Endothelial cell of umbilical vein (primary cell): ENCODE measurements at regions of chr15 and their contacts with region 1.

Region 1: GRCh38 chr15:95259513-95259912 is 1028.2 kb downstream of the MCTP2 start:
- DNase-seq: peak; percentile 92
- H3K4me3 ChIP-seq: no peak overlapping the region
- H3K27ac ChIP-seq: peak overlapping the region; percentile 89
- H3K4me1 ChIP-seq: peaks cover 46% of the 10 kb centered on the region
- H3K27me3 ChIP-seq: no peaks in the 10 kb centered on the region
- CTCF ChIP-seq: peak; percentile 71
- POLR2A ChIP-seq: no peak

Region 2: GRCh38 chr15:94412979-94413746 is 846.4 kb before region 1 on chr15:
- CTCF ChIA-PET with region 1: no interaction called
- POLR2A ChIA-PET with region 1: no interaction called
- dilution Hi-C with region 1: no loop called
- intact Hi-C with region 1: loop called (anchors 10 kb)
- DNase-seq: peak; percentile 47
- H3K4me3 ChIP-seq: no peak overlapping the region
- H3K27ac ChIP-seq: no peak overlapping the region
- H3K4me1 ChIP-seq: no peaks in the 10 kb centered on the region
- H3K27me3 ChIP-seq: no peaks in the 10 kb centered on the region
- CTCF ChIP-seq: peak in 1 of 2 donors; percentile 20
- POLR2A ChIP-seq: no peak

Region 3: GRCh38 chr15:95247099-95247984 is 12.2 kb before region 1 on chr15:
- CTCF ChIA-PET with region 1: interaction called, 10 read pairs
- POLR2A ChIA-PET with region 1: no interaction called
- dilution Hi-C with region 1: no loop called
- intact Hi-C with region 1: no loop called
- DNase-seq: peak; percentile 91
- H3K4me3 ChIP-seq: no peak overlapping the region
- H3K27ac ChIP-seq: peak overlapping the region; percentile 53
- H3K4me1 ChIP-seq: peaks cover 15% of the 10 kb centered on the region
- H3K27me3 ChIP-seq: no peaks in the 10 kb centered on the region
- CTCF ChIP-seq: no peak
- POLR2A ChIP-seq: peak; percentile 16

Region 4: DNA sequence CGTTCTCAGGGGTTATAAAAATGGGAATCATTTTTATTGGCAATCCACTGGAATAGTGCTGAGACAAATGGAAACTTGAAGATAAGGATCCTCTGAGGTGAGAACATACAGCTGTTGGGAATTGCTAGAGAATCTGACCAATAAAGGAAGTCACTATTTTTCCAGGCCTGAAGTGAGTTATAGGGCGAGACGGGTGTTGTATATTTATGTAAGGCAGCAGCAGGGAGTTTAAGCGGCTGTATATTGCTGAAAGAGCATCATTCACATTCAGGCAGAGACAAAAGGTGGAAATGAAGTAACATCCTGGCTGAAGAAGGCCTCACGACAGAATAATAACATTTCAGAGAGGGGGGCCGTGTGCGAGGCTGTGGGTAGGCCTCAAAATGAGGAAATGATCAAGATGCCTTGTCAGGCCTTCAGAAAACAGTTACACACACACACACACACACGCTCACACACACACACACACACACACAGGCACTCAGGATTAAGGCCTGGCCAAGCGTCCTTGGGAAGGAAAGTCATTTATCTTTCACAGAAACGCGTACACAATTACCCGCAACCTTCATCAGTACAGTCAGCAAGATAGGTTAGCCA is 106.1 kb after region 1 on chr15:
- CTCF ChIA-PET with region 1: interaction called, 3 read pairs
- POLR2A ChIA-PET with region 1: no interaction called
- dilution Hi-C with region 1: no loop called
- intact Hi-C with region 1: loop called (anchors 1 kb)
- DNase-seq: peak; percentile 100
- H3K4me3 ChIP-seq: no peak overlapping the region
- H3K27ac ChIP-seq: peak overlapping the region; percentile 98
- H3K4me1 ChIP-seq: peaks cover 37% of the 10 kb centered on the region
- H3K27me3 ChIP-seq: no peaks in the 10 kb centered on the region
- CTCF ChIP-seq: no peak
- POLR2A ChIP-seq: peak; percentile 87

Region 5: DNA sequence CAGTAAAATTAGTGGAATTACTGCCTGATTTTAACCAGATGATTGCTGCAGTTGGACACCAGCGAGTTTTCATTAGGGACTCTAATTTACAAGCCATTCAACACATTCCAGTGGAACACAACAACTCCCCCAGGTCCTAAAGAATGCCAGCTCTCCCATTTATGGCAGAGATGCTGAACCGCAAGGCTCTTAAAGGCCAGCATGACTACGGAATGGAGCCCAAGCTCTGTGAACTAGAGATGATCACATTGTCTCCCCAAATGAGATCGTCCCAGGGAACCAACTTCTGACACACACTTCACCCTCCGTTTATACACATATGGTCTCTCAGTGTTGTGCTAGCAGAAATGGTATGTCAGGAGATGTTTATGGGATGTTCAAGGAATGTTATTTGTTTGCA is 624.8 kb after region 1 on chr15:
- CTCF ChIA-PET with region 1: no interaction called
- POLR2A ChIA-PET with region 1: no interaction called
- dilution Hi-C with region 1: no loop called
- intact Hi-C with region 1: loop called (anchors 10 kb)
- DNase-seq: no peak
- H3K4me3 ChIP-seq: no peak overlapping the region
- H3K27ac ChIP-seq: no peak overlapping the region
- H3K4me1 ChIP-seq: peaks cover 22% of the 10 kb centered on the region
- H3K27me3 ChIP-seq: no peaks in the 10 kb centered on the region
- CTCF ChIP-seq: no peak
- POLR2A ChIP-seq: no peak

Region 6: GRCh38 chr15:96345560-96346399 is 1086.3 kb after region 1 on chr15:
- CTCF ChIA-PET with region 1: interaction called, 6 read pairs
- POLR2A ChIA-PET with region 1: interaction called, 6 read pairs
- dilution Hi-C with region 1: no loop called
- intact Hi-C with region 1: loop called (anchors 1 kb)
- DNase-seq: peak; percentile 86
- H3K4me3 ChIP-seq: peak overlapping the region; percentile 16 to 99 (median 74)
- H3K27ac ChIP-seq: peak overlapping the region; percentile 87
- H3K4me1 ChIP-seq: peaks cover 83% of the 10 kb centered on the region
- H3K27me3 ChIP-seq: no peaks in the 10 kb centered on the region
- CTCF ChIP-seq: peak; percentile 22 to 33
- POLR2A ChIP-seq: no peak